ENCODE measurements at regions of chr22 and their contacts with region 1.

Region 1: DNA sequence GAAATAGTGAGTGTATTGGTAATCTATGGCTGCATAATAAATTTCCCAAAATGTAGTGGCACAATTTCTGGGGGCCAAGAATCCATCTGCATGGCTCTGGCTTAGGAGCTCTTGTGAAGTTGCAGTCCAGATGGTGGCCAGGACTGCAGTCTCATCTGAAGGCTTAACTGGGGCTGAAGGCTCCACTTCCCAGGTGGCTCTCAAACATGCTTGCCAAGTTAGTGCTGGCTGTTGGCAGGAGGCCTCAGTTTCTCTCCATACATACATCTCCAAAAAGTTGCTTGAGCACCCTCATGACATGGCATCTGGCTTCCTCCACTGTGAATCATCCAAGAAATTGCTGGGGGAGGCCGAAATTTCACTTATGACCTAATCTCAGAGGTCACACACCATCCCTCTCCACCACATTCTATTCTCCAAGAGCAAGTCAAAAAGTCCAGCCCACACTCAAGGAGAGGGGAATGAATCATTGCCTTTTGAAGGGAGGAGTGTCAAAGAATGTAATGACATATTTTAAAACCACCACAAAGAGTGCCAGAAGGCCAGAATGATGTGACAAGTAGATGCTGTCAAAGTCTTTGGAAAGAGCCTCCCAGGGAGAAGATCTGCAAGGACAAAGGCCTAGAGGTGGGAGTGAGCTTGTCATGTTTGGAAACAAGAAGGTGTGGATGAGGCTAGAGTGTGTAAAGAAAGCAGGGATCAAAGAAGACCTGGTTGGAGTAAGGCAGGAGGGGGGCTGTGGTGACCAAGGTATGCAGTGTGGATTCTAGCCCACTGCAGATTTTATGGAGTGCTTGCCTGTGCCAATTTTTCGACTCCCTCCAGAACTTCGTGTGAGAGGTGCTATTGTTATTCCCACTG is 566.2 kb downstream of the MIAT start:
- DNase-seq: no peak
- H3K4me3 ChIP-seq: no peak overlapping the region
- H3K27ac ChIP-seq: no peak overlapping the region
- H3K27me3 ChIP-seq: peaks cover 0 to 5% (median 0%) of the 10 kb centered on the region in 45 donors
- CTCF ChIP-seq: no peak

Region 2: DNA sequence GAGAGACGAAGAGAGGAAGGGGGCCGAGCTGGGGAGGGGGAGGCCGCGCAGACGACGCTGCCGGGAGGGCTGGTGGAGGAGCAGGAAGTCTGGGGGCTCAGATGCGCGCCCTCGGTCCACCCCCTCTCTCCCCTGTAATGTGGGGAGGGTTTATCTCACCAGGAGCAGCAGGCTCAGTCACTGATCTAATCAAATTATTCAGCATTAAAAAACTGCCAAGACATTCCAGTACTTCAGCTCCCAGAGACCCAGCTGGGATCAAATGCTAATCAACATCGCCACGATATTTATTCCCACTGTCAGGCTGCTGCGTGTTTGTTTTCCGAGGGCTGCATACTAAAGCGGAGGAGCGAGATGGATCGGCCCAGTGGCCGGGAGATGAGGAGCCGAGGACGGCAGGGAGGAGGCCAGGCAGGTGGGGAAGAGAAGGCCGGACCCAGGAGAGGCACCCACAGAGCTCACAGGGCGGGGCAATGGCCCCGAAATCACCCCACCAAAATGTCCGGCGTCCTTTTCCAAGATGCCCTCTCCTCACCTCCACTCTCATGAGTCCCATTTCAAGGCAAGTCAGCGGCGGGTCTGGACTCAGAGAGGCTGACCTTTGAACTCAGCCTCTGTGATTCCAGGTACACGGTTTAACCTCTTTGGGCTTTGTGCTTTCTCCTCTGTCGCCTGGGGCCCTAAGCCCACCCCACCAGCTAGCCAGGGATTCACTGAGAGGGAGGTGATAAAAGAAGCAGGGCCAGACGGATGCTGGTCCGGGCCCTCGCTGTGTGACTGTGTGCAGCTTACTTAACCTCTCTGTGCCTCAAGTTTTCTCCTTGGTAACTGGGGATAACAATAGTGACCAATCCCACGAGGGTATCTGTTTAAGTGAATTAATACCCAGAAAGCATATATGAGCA is 75.9 kb after region 1 on chr22:
- intact Hi-C with region 1: loop called in 1 of 2 experiments (anchors 10 kb)
- DNase-seq: no peak
- H3K4me3 ChIP-seq: peak overlapping the region in 42 of 59 donors; percentile 1 to 56 (median 31)
- H3K27ac ChIP-seq: peak overlapping the region in 6 of 59 donors; percentile 14 to 57 (median 36)
- H3K27me3 ChIP-seq: peaks cover 0 to 27% (median 3%) of the 10 kb centered on the region in 45 donors
- CTCF ChIP-seq: no peak

Measured in dorsolateral prefrontal cortex (tissue), 120 donors.